ENCODE measurements at regions of chr15 and their contacts with region 1.

Region 1: DNA sequence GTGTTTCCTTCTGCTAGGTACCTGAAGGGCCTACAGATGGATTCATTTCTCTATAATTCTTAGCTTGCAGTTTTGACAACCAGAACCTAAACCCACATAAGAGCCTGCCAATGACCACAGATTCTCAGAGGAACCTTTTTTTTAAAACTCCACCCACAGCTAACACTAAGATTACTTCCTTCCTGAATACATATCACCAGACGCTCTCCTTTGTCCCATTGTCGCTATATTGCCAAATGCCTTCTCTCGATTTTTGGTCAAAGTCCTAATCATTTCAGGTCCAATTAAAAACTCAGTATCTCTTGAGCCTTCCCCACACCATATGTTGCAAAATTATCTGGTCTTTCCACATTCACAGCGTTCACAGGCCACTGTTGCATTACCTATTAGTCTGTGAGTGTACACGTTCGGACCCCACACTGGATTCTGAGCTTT is 12.4 kb downstream of the ZNF710 start:
- DNase-seq: no peak
- ATAC-seq: peak; percentile 77
- H3K4me3 Mint-ChIP-seq: peak overlapping the region; percentile 59
- H3K27ac Mint-ChIP-seq: peak overlapping the region; percentile 80
- H3K4me1 Mint-ChIP-seq: peaks cover 38% of the 10 kb centered on the region
- H3K27me3 Mint-ChIP-seq: no peaks in the 10 kb centered on the region

Region 2: GRCh38 chr15:90001683-90002427 is 11.7 kb before region 1 on chr15:
- POLR2A ChIA-PET with region 1: interaction called, 15 read pairs
- DNase-seq: peak; percentile 74
- ATAC-seq: peak; percentile 41
- H3K4me3 Mint-ChIP-seq: peak overlapping the region; percentile 87
- H3K27ac Mint-ChIP-seq: peak overlapping the region; percentile 90
- H3K4me1 Mint-ChIP-seq: peaks cover 33% of the 10 kb centered on the region
- H3K27me3 Mint-ChIP-seq: peaks cover 2% of the 10 kb centered on the region

Measured in activated naive CD8-positive, alpha-beta T cell treated with anti-CD3 and anti-CD28 coated beads, Interleukin-2, amount 10 ng/mL, durations not matched to agents 7 days and 5 days (primary cell).